A549 (cell line): ENCODE measurements at regions of chr22 and their contacts with region 1.

Region 1: DNA sequence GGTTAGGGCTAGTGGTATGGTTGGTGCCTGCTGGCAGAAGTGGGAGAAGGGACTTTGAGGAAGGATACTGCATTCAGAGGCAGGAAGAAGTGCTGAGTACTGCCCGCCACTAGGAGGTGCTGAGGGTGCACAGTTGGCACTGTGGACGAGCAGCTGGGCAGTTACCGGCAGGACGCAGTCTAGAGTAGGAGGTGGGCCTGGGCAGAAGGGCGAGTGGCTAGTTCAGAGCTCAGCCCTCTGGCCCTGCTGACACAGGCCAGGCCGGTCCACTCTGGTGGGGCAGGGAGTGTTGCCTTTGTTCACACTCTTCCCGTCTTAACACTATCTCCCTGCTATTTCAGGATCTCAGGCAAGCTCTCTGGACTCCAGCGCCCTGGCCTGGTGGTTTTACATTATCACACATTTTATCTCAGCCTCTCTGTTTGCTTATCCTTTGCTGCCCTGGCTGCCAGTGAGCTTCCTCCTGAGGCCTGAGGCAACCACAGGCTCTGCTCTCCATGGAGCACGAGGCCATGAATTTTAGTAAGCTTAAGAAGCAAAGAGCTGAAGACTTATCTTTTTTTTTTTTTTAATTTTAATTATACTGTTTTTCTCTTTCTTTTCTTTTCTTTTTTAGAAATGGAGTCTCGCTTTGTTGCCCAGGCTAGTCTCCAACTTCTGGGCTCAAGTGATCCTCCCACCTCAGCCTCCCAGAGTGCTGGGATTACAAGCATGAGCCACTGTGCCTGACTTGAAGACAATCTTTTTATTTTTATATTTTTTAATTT is 26.9 kb downstream of the SNAP29 start:
- DNase-seq: peak; percentile 83 to 85
- ATAC-seq: peak; percentile 99 to 100
- H3K4me3 ChIP-seq: no peak overlapping the region
- H3K27ac ChIP-seq: peak overlapping the region; percentile 75 to 83
- H3K4me1 ChIP-seq: peaks cover 6% of the 10 kb centered on the region
- CTCF ChIP-seq: peak; percentile 86
- EP300 ChIP-seq: no peak
- POLR2A ChIP-seq: peak; percentile 26
- RAD21 ChIP-seq: peak; percentile 85 to 92

Region 2: GRCh38 chr22:20873214-20873613 is 12.5 kb before region 1 on chr22:
- CTCF ChIA-PET with region 1: interaction called, 35 read pairs
- POLR2A ChIA-PET with region 1: no interaction called
- DNase-seq: no peak
- ATAC-seq: no peak
- H3K4me3 ChIP-seq: no peak overlapping the region
- H3K27ac ChIP-seq: no peak overlapping the region
- H3K4me1 ChIP-seq: no peaks in the 10 kb centered on the region
- CTCF ChIP-seq: no peak
- EP300 ChIP-seq: no peak
- POLR2A ChIP-seq: no peak
- RAD21 ChIP-seq: no peak

Region 3: DNA sequence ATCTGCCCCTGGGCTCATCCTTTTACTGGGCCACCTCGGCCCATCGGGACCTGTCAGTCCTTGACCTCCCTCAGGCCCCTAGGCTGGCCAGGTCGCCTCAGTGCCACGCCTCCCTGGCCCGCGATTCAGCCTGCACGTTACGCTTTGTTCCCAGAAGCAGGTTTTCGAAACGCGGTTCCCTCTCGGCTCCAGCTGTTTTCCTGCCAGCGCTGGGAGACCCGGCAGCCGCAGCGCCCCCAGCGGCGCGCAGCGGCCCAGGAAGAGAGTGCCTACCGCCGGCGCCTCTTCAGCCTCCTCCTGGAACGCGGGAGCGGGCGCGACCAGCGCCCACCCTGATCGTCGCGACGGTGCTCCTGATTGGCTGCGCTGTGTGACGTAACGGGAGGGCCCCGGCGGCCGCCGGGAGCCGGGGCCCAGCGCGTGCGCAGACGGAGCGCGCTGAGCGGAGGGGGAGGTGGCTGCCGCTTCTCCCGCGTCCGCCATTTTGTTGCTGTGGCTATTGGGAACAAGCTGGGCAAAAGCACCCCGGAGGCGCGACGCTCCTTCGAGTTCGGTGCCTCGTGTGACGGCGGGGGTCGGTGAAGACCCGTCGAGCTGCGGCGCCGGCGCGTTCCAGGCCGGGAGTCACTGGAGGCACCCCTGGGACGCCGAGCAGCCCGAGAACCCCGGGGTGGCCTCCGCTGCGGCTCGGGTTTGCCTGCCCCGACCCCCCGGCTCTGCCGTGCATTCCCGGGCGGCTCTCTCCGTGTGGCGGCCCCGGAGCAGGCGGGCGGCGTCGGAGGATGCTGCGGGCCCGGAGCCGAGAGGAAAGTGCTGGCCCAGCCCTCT is 31.5 kb after region 1 on chr22 and contains the start of gene CRKL:
- CTCF ChIA-PET with region 1: interaction called, 11 read pairs
- POLR2A ChIA-PET with region 1: interaction called, 3 read pairs
- DNase-seq: peak; percentile 89 to 94
- ATAC-seq: peak; percentile 97 to 99
- H3K4me3 ChIP-seq: peak within 1 kb of the TSS; percentile 89
- H3K27ac ChIP-seq: peak within 1 kb of the TSS; percentile 95 to 100
- H3K4me1 ChIP-seq: peaks cover 22% of the 10 kb centered on the region
- CTCF ChIP-seq: peak; percentile 76
- EP300 ChIP-seq: no peak
- POLR2A ChIP-seq: peak; percentile 69
- RAD21 ChIP-seq: peak in 1 of 2 experiments; percentile 53; a peak in 3 of 5 replicates
- polyA plus RNA-seq, gene CRKL: 21.4 and 28.9 TPM in 2 replicates

Region 4: GRCh38 chr22:20957316-20958101 is 71.8 kb after region 1 on chr22:
- CTCF ChIA-PET with region 1: interaction called, 19 read pairs
- POLR2A ChIA-PET with region 1: interaction called, 8 read pairs
- DNase-seq: peak; percentile 61 to 80
- ATAC-seq: peak; percentile 87 to 89
- H3K4me3 ChIP-seq: peak overlapping the region; percentile 84
- H3K27ac ChIP-seq: peak overlapping the region; percentile 98
- H3K4me1 ChIP-seq: peaks cover 23% of the 10 kb centered on the region
- CTCF ChIP-seq: no peak
- EP300 ChIP-seq: no peak
- POLR2A ChIP-seq: peak; percentile 66
- RAD21 ChIP-seq: no peak

Region 5: GRCh38 chr22:21016644-21017420 is 131.1 kb after region 1 on chr22:
- CTCF ChIA-PET with region 1: no interaction called
- POLR2A ChIA-PET with region 1: no interaction called
- DNase-seq: no peak
- ATAC-seq: no peak
- H3K4me3 ChIP-seq: no peak overlapping the region
- H3K27ac ChIP-seq: no peak overlapping the region
- H3K4me1 ChIP-seq: peaks cover 18% of the 10 kb centered on the region
- CTCF ChIP-seq: no peak
- EP300 ChIP-seq: no peak
- POLR2A ChIP-seq: no peak
- RAD21 ChIP-seq: no peak